Left colon (tissue), 2 donors: ENCODE measurements at regions of chr11 and their contacts with region 1.

Region 1: GRCh38 chr11:64935359-64936081 is at the start of gene GPHA2:
- DNase-seq: no peak
- ATAC-seq: no peak
- total RNA-seq, gene GPHA2: not detected

Region 2: GRCh38 chr11:64173616-64174355 is 761.7 kb before region 1 on chr11:
- intact Hi-C with region 1: no loop called
- DNase-seq: no peak
- ATAC-seq: no peak

Region 3: GRCh38 chr11:64777449-64778257 is 157.9 kb before region 1 on chr11:
- intact Hi-C with region 1: no loop called
- DNase-seq: peak; percentile 80 to 88
- ATAC-seq: peak; percentile 36

Region 4: GRCh38 chr11:64989416-64989815 is 53.9 kb after region 1 on chr11:
- intact Hi-C with region 1: loop called in 1 of 2 experiments (anchors 10 kb)
- DNase-seq: no peak
- ATAC-seq: no peak

Region 5: DNA sequence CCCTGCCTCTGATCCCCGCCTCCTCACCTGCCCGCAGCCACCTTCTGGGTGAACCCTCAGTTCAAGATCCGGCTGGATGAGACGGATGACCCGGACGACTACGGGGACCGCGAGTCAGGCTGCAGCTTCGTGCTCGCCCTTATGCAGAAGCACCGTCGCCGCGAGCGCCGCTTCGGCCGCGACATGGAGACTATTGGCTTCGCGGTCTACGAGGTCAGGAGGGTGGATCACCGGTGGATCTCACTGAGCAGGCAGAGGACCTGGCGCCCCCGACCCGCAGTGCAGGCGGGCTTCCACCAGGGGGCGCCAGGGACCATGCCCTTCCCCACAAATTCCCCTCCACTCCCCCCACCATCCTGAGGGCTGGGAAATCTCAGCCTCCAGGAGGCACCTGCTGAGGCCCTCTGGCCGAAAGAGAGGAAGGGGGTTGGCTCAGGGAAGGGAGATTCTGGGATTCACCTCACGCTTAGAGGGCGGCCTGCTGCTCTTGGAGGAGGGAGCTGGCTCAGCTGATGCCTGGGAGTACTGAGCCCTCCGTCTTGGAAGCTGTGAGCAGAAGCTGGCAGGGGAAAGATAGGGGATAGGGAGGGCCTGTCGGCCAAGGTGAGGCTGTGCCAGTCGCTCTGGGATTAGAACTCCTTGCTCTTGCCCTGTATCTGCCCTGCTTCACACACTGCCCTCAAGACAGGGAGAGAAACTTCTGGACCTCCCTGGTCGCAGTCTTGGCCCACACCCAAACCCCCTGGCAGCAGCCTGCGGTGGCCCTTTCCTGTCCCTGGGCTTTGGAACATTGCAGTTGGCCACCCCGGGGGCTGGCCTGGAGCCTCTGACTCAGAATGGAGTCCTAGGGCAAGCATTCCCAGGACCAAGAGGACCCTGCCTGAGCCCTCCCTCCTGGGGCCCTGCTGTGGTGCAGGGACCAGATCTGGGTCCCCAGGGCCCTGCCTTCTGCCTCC is 269.4 kb after region 1 on chr11:
- intact Hi-C with region 1: no loop called
- DNase-seq: peak in 1 of 2 donors; percentile 24
- ATAC-seq: peak; percentile 21